ENCODE measurements at regions of chr3 and their contacts with region 1.

Region 1: DNA sequence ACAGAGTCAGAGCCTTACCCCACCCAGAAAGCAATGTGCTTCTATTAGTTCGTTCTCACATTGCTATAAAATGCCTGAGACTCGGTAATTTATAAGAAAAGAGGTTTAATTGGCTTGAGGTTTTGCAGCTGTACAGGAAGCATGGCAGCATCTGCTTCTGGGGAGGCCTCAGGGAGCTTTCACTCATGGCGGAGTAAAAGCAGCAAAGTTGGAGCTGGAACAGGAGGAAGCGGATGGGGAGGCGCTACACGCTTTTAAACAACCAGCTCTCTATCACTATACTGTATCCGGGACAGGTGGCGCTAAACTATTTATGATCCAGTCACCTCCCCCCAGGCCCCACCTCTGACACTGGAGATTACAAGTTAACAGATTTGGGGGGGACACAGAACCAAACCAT is 176.3 kb upstream of the BHLHE40 start:
- DNase-seq: no peak
- H3K4me3 Mint-ChIP-seq: no peak overlapping the region
- H3K27ac Mint-ChIP-seq: no peak overlapping the region
- H3K4me1 Mint-ChIP-seq: no peaks in the 10 kb centered on the region
- H3K27me3 Mint-ChIP-seq: no peaks in the 10 kb centered on the region
- CTCF ChIP-seq: no peak

Region 2: DNA sequence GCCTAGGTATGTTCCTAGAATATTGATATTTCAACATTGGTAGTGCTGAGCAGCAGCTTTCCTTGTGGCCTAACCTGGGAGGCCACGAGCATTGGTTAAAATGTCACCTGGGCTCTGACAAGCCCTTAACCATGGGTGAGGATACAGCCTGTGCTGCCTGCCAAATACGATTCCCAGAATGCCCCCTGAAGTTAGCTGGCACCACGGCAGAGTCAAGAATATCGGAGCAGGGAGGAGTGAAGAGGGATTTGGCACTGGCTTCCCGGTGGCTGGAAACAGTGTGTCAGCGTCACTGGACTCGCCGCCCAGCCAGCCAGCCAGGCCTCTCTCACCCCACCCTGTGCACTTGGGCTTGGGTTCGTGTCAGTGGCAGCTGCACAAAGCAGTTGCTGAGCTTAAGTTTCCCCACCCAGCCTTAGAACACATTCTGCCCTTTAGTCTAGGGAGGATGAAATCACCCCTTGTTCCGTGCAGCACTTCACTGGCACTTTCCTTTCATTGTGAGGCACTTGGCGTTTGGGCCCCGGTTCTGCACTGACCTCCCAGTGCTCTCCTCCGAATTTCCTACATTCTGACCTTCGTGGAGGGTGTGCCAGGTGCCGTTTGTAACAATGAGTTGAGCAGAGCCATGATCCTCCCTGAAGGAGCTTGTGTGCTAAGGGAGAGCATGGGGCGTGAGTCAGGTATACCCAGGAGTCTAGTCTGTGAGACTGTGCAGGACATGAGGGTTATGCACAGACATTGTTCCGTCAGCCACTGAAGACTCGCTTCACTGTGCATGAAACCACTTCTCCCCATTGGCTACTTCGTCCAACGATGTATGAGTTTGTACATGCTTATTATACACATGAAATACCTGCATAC is 23.6 kb after region 1 on chr3:
- CTCF ChIA-PET with region 1: no interaction called
- intact Hi-C with region 1: loop called (anchors 1 kb)
- DNase-seq: peak; percentile 48
- H3K4me3 Mint-ChIP-seq: peak overlapping the region; percentile 39
- H3K27ac Mint-ChIP-seq: peak overlapping the region; percentile 65
- H3K4me1 Mint-ChIP-seq: peaks cover 57% of the 10 kb centered on the region
- H3K27me3 Mint-ChIP-seq: no peaks in the 10 kb centered on the region
- CTCF ChIP-seq: no peak